IMR-90 (cell line): ENCODE measurements at regions of chr9 and their contacts with region 1.

Region 1: DNA sequence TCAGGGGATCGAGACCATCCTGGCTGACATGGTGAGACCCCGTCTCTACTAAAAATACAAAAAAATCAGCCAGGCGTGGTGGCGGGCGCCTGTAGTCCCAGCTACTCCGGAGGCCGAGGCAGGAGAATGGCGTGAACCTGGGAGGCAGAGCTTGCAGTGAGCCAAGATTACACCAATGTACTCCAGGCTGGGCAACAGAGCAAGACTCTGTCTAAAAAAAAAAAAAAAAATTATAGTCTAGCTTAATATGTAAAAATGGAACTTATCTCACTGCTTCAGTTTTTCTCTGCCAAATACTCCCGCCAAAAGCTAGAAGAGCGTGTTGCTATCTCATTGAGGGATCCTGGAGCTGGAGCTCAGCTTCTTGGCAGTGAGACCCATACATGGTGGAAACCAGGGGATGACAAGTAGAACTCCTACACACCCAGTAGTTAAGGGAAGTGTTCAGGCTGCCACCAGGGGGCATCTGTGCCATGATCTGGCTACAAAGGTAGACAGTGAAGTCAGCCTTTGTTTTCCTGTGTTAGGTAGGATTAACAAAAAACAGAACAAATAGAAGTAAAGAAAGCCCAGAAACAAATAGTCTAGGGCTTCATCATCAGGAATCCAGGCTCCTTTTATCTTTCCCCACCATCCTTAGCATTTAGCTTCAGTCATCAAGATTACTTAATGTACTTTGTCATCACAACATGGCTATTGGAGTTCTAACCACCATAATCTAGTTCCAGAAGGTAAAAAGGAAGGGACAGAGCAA is 33.6 kb upstream of the GLIPR2 start:
- DNase-seq: peak; percentile 71
- ATAC-seq: no peak
- H3K4me3 ChIP-seq: no peak overlapping the region
- H3K27ac ChIP-seq: peak overlapping the region; percentile 90
- H3K4me1 ChIP-seq: peaks cover 13% of the 10 kb centered on the region
- H3K27me3 ChIP-seq: no peaks in the 10 kb centered on the region
- CTCF ChIP-seq: peak; percentile 49
- POLR2A ChIP-seq: no peak
- RAD21 ChIP-seq: peak; percentile 47

Region 2: GRCh38 chr9:35790385-35791296 is 312.3 kb before region 1 on chr9:
- CTCF ChIA-PET with region 1: no interaction called
- POLR2A ChIA-PET with region 1: interaction called, 13 read pairs
- dilution Hi-C with region 1: no loop called
- in situ Hi-C with region 1: no loop called
- intact Hi-C with region 1: no loop called
- DNase-seq: peak; percentile 83
- ATAC-seq: peak; percentile 85
- H3K4me3 ChIP-seq: no peak overlapping the region
- H3K27ac ChIP-seq: peak overlapping the region; percentile 68
- H3K4me1 ChIP-seq: peaks cover 28% of the 10 kb centered on the region
- H3K27me3 ChIP-seq: peaks cover 5% of the 10 kb centered on the region
- CTCF ChIP-seq: peak; percentile 97
- POLR2A ChIP-seq: peak; percentile 47; the same call in 1 of the 2 replicates
- RAD21 ChIP-seq: peak; percentile 99

Region 3: DNA sequence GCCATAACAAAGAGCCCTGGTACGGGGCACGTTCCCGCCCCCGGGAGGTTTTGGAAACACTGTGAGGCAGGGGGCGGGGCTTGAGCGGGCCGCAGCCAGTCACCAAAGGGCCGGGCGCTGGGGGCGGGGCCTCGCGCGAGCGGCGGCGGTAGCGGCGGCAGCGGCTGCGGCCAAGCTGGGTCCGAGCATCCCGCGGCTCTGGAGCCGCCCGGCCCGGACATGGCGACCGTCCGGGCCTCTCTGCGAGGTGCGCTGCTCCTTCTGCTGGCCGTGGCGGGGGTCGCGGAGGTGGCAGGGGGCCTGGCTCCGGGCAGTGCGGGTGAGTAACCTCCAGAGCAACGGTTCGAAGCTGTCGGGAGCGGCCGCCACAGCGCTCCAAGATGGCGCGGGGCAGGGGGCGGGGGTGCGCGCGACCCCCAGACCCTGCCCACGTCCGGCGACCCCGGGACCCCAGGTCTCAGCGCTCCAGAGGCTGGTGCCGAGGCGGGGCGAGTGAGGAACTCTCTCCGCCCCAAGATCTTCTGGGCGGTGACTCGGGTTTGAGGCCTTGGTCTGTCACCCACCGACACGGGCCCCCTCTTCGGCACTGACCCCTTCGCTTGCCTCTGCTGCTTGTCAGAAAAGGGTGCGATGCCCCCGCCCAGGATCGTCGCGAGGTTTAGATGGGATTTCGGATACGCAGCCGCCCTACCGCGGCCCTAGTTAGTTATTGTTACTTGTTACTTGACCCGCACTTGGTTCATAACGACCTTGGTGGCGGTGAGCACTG is 66.0 kb before region 1 on chr9 and contains the start of gene RECK:
- CTCF ChIA-PET with region 1: no interaction called
- POLR2A ChIA-PET with region 1: no interaction called
- dilution Hi-C with region 1: no loop called
- in situ Hi-C with region 1: no loop called
- intact Hi-C with region 1: loop called (anchors 5 kb)
- DNase-seq: peak; percentile 84
- ATAC-seq: peak; percentile 90
- H3K4me3 ChIP-seq: peak within 1 kb of the TSS; percentile 97
- H3K27ac ChIP-seq: peak within 1 kb of the TSS; percentile 98
- H3K4me1 ChIP-seq: peaks cover 12% of the 10 kb centered on the region
- H3K27me3 ChIP-seq: no peaks in the 10 kb centered on the region
- CTCF ChIP-seq: no peak
- POLR2A ChIP-seq: peak; percentile 78
- RAD21 ChIP-seq: no peak
- total RNA-seq, gene RECK: 23.5 and 27.2 TPM in 2 replicates

Region 4: GRCh38 chr9:36091026-36091953 is 11.6 kb before region 1 on chr9:
- CTCF ChIA-PET with region 1: interaction called, 5 read pairs
- POLR2A ChIA-PET with region 1: no interaction called
- dilution Hi-C with region 1: no loop called
- in situ Hi-C with region 1: no loop called
- intact Hi-C with region 1: loop called (anchors 1 kb)
- DNase-seq: peak; percentile 96
- ATAC-seq: peak; percentile 89
- H3K4me3 ChIP-seq: no peak overlapping the region
- H3K27ac ChIP-seq: peak overlapping the region; percentile 100
- H3K4me1 ChIP-seq: peaks cover 21% of the 10 kb centered on the region
- H3K27me3 ChIP-seq: no peaks in the 10 kb centered on the region
- CTCF ChIP-seq: peak; percentile 30; the same call in 1 of the 2 replicates
- POLR2A ChIP-seq: peak; percentile 31; the same call in 1 of the 2 replicates
- RAD21 ChIP-seq: peak; percentile 49

Region 5: GRCh38 chr9:36177571-36177970 is 74.7 kb after region 1 on chr9:
- CTCF ChIA-PET with region 1: no interaction called
- POLR2A ChIA-PET with region 1: interaction called, 11 read pairs
- dilution Hi-C with region 1: no loop called
- in situ Hi-C with region 1: no loop called
- intact Hi-C with region 1: no loop called
- DNase-seq: no peak
- ATAC-seq: no peak
- H3K4me3 ChIP-seq: no peak overlapping the region
- H3K27ac ChIP-seq: peak overlapping the region; percentile 61; the same call in 1 of the 2 replicates
- H3K4me1 ChIP-seq: peaks cover 2% of the 10 kb centered on the region; the same call in 1 of the 2 replicates
- H3K27me3 ChIP-seq: no peaks in the 10 kb centered on the region
- CTCF ChIP-seq: no peak
- POLR2A ChIP-seq: no peak
- RAD21 ChIP-seq: no peak

Region 6: GRCh38 chr9:36400332-36401163 is 297.6 kb after region 1 on chr9:
- CTCF ChIA-PET with region 1: no interaction called
- POLR2A ChIA-PET with region 1: no interaction called
- dilution Hi-C with region 1: no loop called
- in situ Hi-C with region 1: no loop called
- intact Hi-C with region 1: no loop called
- DNase-seq: peak; percentile 75
- ATAC-seq: peak; percentile 91
- H3K4me3 ChIP-seq: peak overlapping the region; percentile 65
- H3K27ac ChIP-seq: peak overlapping the region; percentile 97
- H3K4me1 ChIP-seq: peaks cover 2% of the 10 kb centered on the region; the same call in 1 of the 2 replicates
- H3K27me3 ChIP-seq: no peaks in the 10 kb centered on the region
- CTCF ChIP-seq: no peak
- POLR2A ChIP-seq: no peak; the same call in 1 of the 2 replicates
- RAD21 ChIP-seq: no peak